Calu3 (cell line): ENCODE measurements at regions of chr4 and their contacts with region 1.

Region 1: GRCh38 chr4:16264798-16265197 is 38.5 kb upstream of the TAPT1 start:
- DNase-seq: no peak
- H3K4me3 Mint-ChIP-seq: no peak overlapping the region
- H3K27ac Mint-ChIP-seq: no peak overlapping the region
- H3K4me1 Mint-ChIP-seq: no peaks in the 10 kb centered on the region
- H3K27me3 Mint-ChIP-seq: no peaks in the 10 kb centered on the region
- CTCF ChIP-seq: no peak

Region 2: GRCh38 chr4:15963001-15963451 is 301.8 kb before region 1 on chr4 and contains the start of gene FGFBP2:
- CTCF ChIA-PET with region 1: interaction called, 6 read pairs
- intact Hi-C with region 1: loop called (anchors 2 kb)
- DNase-seq: peak; percentile 66
- H3K4me3 Mint-ChIP-seq: no peak within 1 kb of the TSS
- H3K27ac Mint-ChIP-seq: no peak within 1 kb of the TSS
- H3K4me1 Mint-ChIP-seq: no peaks in the 10 kb centered on the region
- H3K27me3 Mint-ChIP-seq: no peaks in the 10 kb centered on the region
- CTCF ChIP-seq: peak; percentile 41
- total RNA-seq, gene FGFBP2: not detected in 2 replicates

Region 3: GRCh38 chr4:16026160-16026761 is 238.5 kb before region 1 on chr4:
- CTCF ChIA-PET with region 1: interaction called, 4 read pairs
- intact Hi-C with region 1: loop called (anchors 1 kb)
- DNase-seq: peak; percentile 24
- H3K4me3 Mint-ChIP-seq: no peak overlapping the region
- H3K27ac Mint-ChIP-seq: no peak overlapping the region
- H3K4me1 Mint-ChIP-seq: peaks cover 25% of the 10 kb centered on the region
- H3K27me3 Mint-ChIP-seq: no peaks in the 10 kb centered on the region
- CTCF ChIP-seq: peak; percentile 54